Panc1 (cell line): ENCODE measurements at regions of chr17 and their contacts with region 1.

Region 1: DNA sequence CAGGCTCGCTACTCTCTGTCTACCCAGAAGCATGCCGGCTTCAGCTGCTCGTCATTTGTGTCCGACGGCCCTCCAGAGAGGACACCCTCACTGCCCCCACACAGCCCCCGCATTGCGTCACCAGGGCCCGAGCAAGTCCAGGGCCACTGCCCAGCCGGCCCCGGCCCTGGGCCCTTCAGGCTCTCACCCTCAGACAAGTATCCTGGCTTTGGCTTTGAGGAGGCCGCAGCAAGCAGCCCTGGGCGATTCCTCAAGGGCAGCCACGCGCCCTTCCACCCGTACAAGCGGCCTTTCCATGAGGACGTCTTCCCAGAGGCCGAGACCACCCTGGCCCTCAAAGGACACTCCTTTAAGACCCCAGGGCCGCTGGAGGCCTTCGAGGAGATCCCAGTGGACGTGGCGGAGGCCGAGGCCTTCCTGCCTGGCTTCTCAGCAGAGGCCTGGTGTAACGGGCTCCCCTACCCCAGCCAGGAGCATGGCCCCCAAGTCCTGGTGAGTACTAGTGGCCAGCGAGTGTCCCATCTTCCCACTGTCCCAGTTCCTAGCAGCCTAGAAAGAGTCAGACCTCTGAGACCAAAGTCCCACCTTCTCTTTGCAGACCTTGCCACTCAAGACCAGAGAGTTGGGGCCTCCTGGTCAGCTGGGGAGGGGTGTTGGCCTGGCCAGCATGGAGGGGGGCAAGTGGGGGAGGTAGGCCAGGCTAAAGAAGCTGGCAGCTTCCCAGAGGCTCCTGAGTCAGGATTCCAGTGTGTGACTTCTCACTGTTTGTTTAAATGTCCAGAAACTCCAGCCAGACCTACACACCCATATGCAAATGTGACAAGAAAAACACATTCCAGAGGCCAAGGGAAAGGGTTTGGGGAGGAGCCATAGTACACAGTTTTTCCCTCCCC is 18.6 kb downstream of the FOXN1 start:
- DNase-seq: no peak
- ATAC-seq: no peak
- H3K4me3 ChIP-seq: no peak overlapping the region
- H3K27ac ChIP-seq: no peak overlapping the region
- H3K4me1 ChIP-seq: no peaks in the 10 kb centered on the region
- H3K27me3 ChIP-seq: no peaks in the 10 kb centered on the region
- CTCF ChIP-seq: no peak

Region 2: DNA sequence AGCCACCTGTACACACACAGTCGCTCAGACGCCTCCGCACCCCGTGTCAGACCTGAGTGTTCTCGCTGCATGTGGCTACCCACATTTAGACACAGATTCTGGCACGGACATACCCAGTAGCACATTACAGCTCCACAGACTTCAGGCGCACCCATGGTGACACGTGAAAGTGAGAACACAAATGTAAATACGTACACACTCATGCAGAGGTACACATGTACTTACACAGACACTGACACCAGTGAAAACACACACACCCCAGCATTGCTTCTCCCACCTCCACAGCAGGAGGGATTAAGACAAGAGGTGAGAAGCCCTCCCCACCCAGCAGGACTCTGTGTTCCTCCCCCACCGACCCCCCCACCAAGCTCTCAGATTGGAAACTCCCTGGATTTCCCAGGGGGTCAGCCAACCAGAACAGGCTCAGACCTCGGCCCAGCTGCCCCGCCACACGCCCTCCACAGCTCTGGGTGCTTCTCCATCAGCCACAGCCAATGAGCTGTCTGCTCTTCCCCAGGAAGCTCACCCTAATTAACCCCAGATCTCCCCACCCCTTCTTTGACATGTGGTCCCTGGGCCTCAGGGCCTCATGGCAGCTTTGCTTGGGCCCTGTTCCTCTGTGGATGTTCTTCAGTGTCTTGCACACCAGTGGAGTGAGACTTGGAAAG is 23.9 kb before region 1 on chr17:
- CTCF ChIA-PET with region 1: no interaction called
- POLR2A ChIA-PET with region 1: interaction called, 12 read pairs
- in situ Hi-C with region 1: no loop called
- intact Hi-C with region 1: no loop called
- DNase-seq: no peak
- ATAC-seq: peak; percentile 31; the same call in 1 of the 2 replicates
- H3K4me3 ChIP-seq: no peak overlapping the region
- H3K27ac ChIP-seq: no peak overlapping the region
- H3K4me1 ChIP-seq: no peaks in the 10 kb centered on the region
- H3K27me3 ChIP-seq: peaks cover 2% of the 10 kb centered on the region
- CTCF ChIP-seq: no peak

Region 3: GRCh38 chr17:28547623-28548416 is 23.1 kb after region 1 on chr17:
- CTCF ChIA-PET with region 1: no interaction called
- POLR2A ChIA-PET with region 1: no interaction called
- in situ Hi-C with region 1: no loop called
- intact Hi-C with region 1: no loop called
- DNase-seq: peak; percentile 60
- ATAC-seq: peak; percentile 80
- H3K4me3 ChIP-seq: no peak overlapping the region
- H3K27ac ChIP-seq: no peak overlapping the region
- H3K4me1 ChIP-seq: peaks cover 7% of the 10 kb centered on the region; the same call in 1 of the 2 replicates
- H3K27me3 ChIP-seq: no peaks in the 10 kb centered on the region
- CTCF ChIP-seq: peak; percentile 96

Region 4: DNA sequence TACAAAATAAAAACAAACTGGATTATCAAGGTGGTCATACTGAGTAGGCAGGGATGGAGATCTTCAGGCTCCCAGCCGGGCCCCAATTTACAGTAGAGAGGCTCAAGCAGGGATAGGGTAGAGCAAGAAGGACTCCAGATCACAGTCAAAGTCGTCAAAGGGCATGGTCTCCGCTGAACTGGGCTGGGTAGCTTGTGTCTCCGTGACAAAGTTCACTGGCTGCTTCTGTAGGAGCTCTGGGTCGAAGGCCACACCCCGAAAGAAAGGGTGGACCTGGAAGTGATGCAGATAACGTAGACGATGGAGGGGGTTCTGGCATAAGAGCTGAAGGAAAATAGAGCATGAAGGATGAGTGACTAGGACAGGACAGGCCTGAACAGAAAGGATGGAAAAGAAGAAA is 85.7 kb after region 1 on chr17:
- CTCF ChIA-PET with region 1: no interaction called
- POLR2A ChIA-PET with region 1: no interaction called
- in situ Hi-C with region 1: no loop called
- intact Hi-C with region 1: no loop called
- DNase-seq: no peak
- ATAC-seq: no peak
- H3K4me3 ChIP-seq: no peak overlapping the region
- H3K27ac ChIP-seq: no peak overlapping the region
- H3K4me1 ChIP-seq: no peaks in the 10 kb centered on the region
- H3K27me3 ChIP-seq: no peaks in the 10 kb centered on the region
- CTCF ChIP-seq: no peak